HepG2 (cell line): ENCODE measurements at regions of chr2 and their contacts with region 1.

Region 1: GRCh38 chr2:64653349-64654062 is at the start of gene SERTAD2:
- DNase-seq: peak; percentile 75
- ATAC-seq: peak; percentile 76
- H3K4me3 ChIP-seq: peak within 1 kb of the TSS; percentile 92 to 97 (median 94)
- H3K27ac ChIP-seq: peak within 1 kb of the TSS; percentile 96
- H3K4me1 ChIP-seq: peaks cover 71% of the 10 kb centered on the region
- H3K27me3 ChIP-seq: no peaks in the 10 kb centered on the region; a peak in 1 of 5 replicates
- CTCF ChIP-seq: peak; percentile 58
- EP300 ChIP-seq: no peak
- POLR2A ChIP-seq: peak; percentile 56 to 86; a peak in 3 of 4 replicates
- RAD21 ChIP-seq: peak; percentile 39
- total RNA-seq, gene SERTAD2: 6.7 and 11.8 TPM in 2 replicates

Region 2: DNA sequence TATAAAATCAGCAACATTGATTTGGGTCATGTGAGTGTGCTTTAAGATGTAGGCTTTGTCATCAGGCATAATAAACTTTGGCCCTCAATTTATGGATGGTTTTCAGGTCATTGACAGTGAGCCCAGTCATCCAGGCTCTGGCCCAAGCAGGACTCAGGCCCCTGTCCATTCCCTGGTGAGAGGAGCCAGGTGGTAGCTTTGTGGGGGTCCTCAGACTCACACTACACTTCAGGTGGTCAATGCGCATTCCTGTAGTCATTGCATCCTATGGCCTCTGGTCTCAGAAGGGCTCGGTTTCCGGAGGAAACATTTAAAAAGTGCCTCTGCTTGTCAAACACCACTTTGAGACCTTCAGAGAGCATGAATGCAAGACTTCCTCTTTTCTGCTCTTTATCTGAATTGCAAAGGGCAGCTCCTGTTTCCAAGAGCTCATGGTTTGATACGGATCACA is 179.4 kb before region 1 on chr2:
- CTCF ChIA-PET with region 1: no interaction called
- POLR2A ChIA-PET with region 1: no interaction called
- in situ Hi-C with region 1: no loop called
- intact Hi-C with region 1: no loop called
- DNase-seq: no peak
- ATAC-seq: no peak
- H3K4me3 ChIP-seq: no peak overlapping the region
- H3K27ac ChIP-seq: no peak overlapping the region
- H3K4me1 ChIP-seq: peaks cover 16% of the 10 kb centered on the region
- H3K27me3 ChIP-seq: peaks cover 0 to 11% of the 10 kb centered on the region in 2 experiments; a peak in 3 of 5 replicates
- CTCF ChIP-seq: no peak
- EP300 ChIP-seq: no peak
- POLR2A ChIP-seq: no peak
- RAD21 ChIP-seq: no peak

Region 3: DNA sequence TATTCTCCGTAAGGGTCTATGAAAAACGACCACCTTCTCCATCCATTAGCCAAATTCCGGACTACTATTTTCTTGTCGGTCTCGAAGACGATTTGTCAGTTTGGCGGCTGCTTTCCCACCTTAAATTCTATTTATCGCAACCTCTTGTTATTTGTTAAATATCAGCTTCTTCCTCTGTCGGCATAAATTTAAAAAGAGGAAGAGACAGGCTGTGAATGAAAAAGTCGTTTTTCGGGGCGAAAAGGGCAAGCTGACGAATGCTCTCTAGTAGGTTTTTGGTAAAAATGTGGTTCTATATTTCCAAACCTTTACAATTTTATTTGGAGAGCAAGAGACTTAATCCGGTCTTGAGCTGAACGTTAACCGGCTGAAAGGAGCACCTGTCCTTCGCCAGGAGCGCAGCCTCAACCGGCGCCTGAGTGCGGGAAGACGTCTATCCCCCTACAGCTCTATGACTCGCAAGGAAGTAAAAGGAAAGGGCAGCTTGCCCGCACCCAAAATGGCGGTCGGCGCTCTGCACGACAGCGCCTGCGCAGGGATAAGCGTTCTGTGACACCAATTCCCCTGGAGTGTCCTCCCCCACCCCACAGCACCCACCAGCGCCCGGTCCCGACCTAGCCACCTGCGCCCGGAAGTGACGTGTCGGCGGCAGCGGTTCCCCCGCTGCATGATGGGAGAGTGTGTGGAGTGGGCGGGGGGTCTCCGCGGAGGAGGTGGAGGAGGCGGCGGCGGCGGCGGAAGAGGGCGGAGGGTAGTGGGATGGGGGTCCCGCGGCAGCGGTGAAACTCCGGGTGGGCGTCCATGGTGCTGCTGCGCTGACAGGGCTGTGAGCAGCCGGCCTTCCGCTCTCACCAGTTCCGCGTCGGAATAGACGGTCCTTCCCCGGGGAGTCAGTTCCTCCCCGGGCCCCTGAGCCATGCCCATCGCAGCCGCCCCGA is 129.6 kb before region 1 on chr2 and contains the start of gene AFTPH:
- CTCF ChIA-PET with region 1: no interaction called
- POLR2A ChIA-PET with region 1: interaction called, 4 read pairs
- in situ Hi-C with region 1: no loop called
- intact Hi-C with region 1: loop called (anchors 5 kb)
- DNase-seq: peak; percentile 99
- ATAC-seq: peak; percentile 96
- H3K4me3 ChIP-seq: peak within 1 kb of the TSS; percentile 95 to 100 (median 98)
- H3K27ac ChIP-seq: peak within 1 kb of the TSS; percentile 73
- H3K4me1 ChIP-seq: peaks cover 30% of the 10 kb centered on the region
- H3K27me3 ChIP-seq: no peaks in the 10 kb centered on the region; a peak in 1 of 5 replicates
- CTCF ChIP-seq: peak; percentile 62
- EP300 ChIP-seq: peak; percentile 34 to 54; a peak in 2 of 4 replicates
- POLR2A ChIP-seq: peak; percentile 82 to 90
- RAD21 ChIP-seq: no peak; the same call in 1 of the 2 replicates
- total RNA-seq, gene AFTPH: 36.8 and 45.9 TPM in 2 replicates

Region 4: DNA sequence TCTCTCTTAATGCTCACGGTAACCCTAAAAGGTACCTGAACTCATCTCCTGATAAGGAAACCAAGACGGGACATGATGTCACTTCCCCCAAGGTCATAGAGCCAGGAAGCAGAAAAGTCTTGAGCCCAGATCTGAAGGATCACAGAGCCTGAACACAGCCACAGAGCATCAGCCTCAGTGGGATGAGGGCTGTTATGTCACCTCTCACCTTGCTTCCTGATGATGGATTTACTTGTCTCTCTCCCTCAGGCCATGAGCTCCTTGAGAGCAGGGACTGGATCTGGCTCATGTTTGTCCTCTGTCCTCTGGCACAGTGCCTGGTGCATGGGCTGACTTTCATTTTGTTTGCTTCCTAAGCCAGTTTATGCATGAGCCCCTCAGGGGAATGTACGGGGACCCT is 54.0 kb before region 1 on chr2:
- CTCF ChIA-PET with region 1: no interaction called
- POLR2A ChIA-PET with region 1: no interaction called
- in situ Hi-C with region 1: no loop called
- intact Hi-C with region 1: no loop called
- DNase-seq: peak; percentile 23
- ATAC-seq: peak; percentile 49
- H3K4me3 ChIP-seq: no peak overlapping the region
- H3K27ac ChIP-seq: no peak overlapping the region
- H3K4me1 ChIP-seq: peaks cover 25% of the 10 kb centered on the region
- H3K27me3 ChIP-seq: peaks cover 0 to 2% of the 10 kb centered on the region in 2 experiments; a peak in 1 of 5 replicates
- CTCF ChIP-seq: no peak
- EP300 ChIP-seq: no peak
- POLR2A ChIP-seq: no peak
- RAD21 ChIP-seq: no peak

Region 5: GRCh38 chr2:64666810-64667438 is 13.4 kb after region 1 on chr2:
- CTCF ChIA-PET with region 1: no interaction called
- POLR2A ChIA-PET with region 1: interaction called, 120 read pairs
- in situ Hi-C with region 1: no loop called
- intact Hi-C with region 1: loop called (anchors 2 kb)
- DNase-seq: peak; percentile 76
- ATAC-seq: peak; percentile 86
- H3K4me3 ChIP-seq: peak overlapping the region in 1 of 3 experiments; percentile 1; a peak in 2 of 6 replicates
- H3K27ac ChIP-seq: peak overlapping the region; percentile 69
- H3K4me1 ChIP-seq: peaks cover 57% of the 10 kb centered on the region
- H3K27me3 ChIP-seq: no peaks in the 10 kb centered on the region
- CTCF ChIP-seq: 0 out of 2 replicates have a peak, but pooled peaks have one; percentile 4
- EP300 ChIP-seq: peak in 1 of 2 experiments; percentile 79; a peak in 1 of 4 replicates
- POLR2A ChIP-seq: no peak
- RAD21 ChIP-seq: no peak

Region 6: GRCh38 chr2:64698668-64699444 is 45.4 kb after region 1 on chr2:
- CTCF ChIA-PET with region 1: no interaction called
- POLR2A ChIA-PET with region 1: interaction called, 12 read pairs
- in situ Hi-C with region 1: no loop called
- intact Hi-C with region 1: no loop called
- DNase-seq: peak; percentile 72
- ATAC-seq: peak; percentile 86
- H3K4me3 ChIP-seq: no peak overlapping the region
- H3K27ac ChIP-seq: peak overlapping the region; percentile 3
- H3K4me1 ChIP-seq: peaks cover 20% of the 10 kb centered on the region
- H3K27me3 ChIP-seq: no peaks in the 10 kb centered on the region
- CTCF ChIP-seq: no peak
- EP300 ChIP-seq: peak in 1 of 2 experiments; percentile 10; a peak in 1 of 4 replicates
- POLR2A ChIP-seq: no peak
- RAD21 ChIP-seq: no peak

Region 7: DNA sequence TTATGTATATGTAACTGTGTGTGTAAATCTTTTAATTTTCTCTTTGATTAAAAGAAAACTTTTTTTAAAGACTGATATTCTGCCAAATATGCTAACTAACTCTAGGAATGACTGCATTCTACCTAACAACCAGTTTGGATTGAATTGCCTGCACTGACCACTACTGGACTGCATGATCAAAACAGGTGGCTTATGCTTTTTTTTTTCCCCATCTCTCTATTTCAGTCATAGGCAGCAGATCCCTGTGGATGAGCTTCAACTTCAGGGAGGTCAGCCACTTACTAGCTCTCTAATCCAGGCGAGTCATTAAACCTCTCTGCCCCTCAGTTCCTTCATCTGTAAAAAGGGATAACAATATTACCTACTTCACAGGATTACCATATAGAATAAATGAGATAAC is 138.8 kb after region 1 on chr2:
- CTCF ChIA-PET with region 1: no interaction called
- POLR2A ChIA-PET with region 1: interaction called, 3 read pairs
- in situ Hi-C with region 1: no loop called
- intact Hi-C with region 1: loop called (anchors 1 kb)
- DNase-seq: peak; percentile 21
- ATAC-seq: peak; percentile 71
- H3K4me3 ChIP-seq: no peak overlapping the region
- H3K27ac ChIP-seq: no peak overlapping the region
- H3K4me1 ChIP-seq: peaks cover 11% of the 10 kb centered on the region
- H3K27me3 ChIP-seq: peaks cover 0 to 31% of the 10 kb centered on the region in 2 experiments; a peak in 4 of 5 replicates
- CTCF ChIP-seq: peak; percentile 33
- EP300 ChIP-seq: no peak
- POLR2A ChIP-seq: no peak
- RAD21 ChIP-seq: no peak

Region 8: GRCh38 chr2:64865073-64865830 is 211.7 kb after region 1 on chr2:
- CTCF ChIA-PET with region 1: interaction called, 3 read pairs
- POLR2A ChIA-PET with region 1: interaction called, 8 read pairs
- in situ Hi-C with region 1: loop called (anchors 5 kb)
- intact Hi-C with region 1: loop called (anchors 1 kb)
- DNase-seq: no peak
- ATAC-seq: peak; percentile 90
- H3K4me3 ChIP-seq: peak overlapping the region; percentile 78 to 86 (median 81)
- H3K27ac ChIP-seq: no peak overlapping the region
- H3K4me1 ChIP-seq: peaks cover 30% of the 10 kb centered on the region
- H3K27me3 ChIP-seq: peaks cover 5 to 61% of the 10 kb centered on the region in 2 experiments
- CTCF ChIP-seq: peak; percentile 60; the same call in 1 of the 2 replicates
- EP300 ChIP-seq: no peak
- POLR2A ChIP-seq: no peak
- RAD21 ChIP-seq: peak; percentile 98

Region 9: GRCh38 chr2:65215946-65216345 is 562.4 kb after region 1 on chr2:
- CTCF ChIA-PET with region 1: no interaction called
- POLR2A ChIA-PET with region 1: no interaction called
- in situ Hi-C with region 1: no loop called
- intact Hi-C with region 1: no loop called
- DNase-seq: no peak
- ATAC-seq: no peak
- H3K4me3 ChIP-seq: no peak overlapping the region
- H3K27ac ChIP-seq: no peak overlapping the region
- H3K4me1 ChIP-seq: no peaks in the 10 kb centered on the region
- H3K27me3 ChIP-seq: no peaks in the 10 kb centered on the region; a peak in 1 of 5 replicates
- CTCF ChIP-seq: no peak
- EP300 ChIP-seq: no peak
- POLR2A ChIP-seq: no peak
- RAD21 ChIP-seq: no peak